ENCODE measurements at regions of chrX and their contacts with region 1.

Region 1: GRCh38 chrX:55717521-55718497 is at the start of gene RRAGB:
- DNase-seq: peak; percentile 85
- ATAC-seq: peak; percentile 100
- H3K4me3 ChIP-seq: peak within 1 kb of the TSS; percentile 76 to 79
- H3K27ac ChIP-seq: peak within 1 kb of the TSS; percentile 93
- H3K4me1 ChIP-seq: peaks cover 3% of the 10 kb centered on the region
- H3K27me3 ChIP-seq: no peaks in the 10 kb centered on the region
- CTCF ChIP-seq: peak; percentile 82
- total RNA-seq, gene RRAGB: 19.6 TPM

Region 2: DNA sequence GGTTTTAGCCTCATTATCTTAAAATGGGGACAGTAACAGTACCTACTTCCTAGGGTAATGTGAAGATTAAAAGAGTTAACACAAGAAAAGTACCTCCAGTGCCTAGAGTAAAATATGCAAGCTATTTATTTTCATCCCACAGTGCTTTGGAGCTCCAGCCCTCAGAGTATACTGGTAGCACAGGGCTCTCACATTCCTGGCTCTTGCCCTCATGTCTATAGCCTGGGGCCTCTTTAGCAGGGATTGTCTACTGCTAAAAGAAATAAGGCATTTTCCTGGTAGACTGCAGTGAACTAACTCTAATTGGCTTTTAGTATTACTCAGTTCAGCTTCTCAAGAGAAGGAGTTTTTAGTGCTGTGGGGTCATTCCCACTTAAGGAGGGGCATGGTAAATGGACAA is 60.5 kb after region 1 on chrX:
- CTCF ChIA-PET with region 1: no interaction called
- POLR2A ChIA-PET with region 1: no interaction called
- in situ Hi-C with region 1: no loop called
- intact Hi-C with region 1: loop called (anchors 10 kb)
- DNase-seq: no peak
- ATAC-seq: no peak
- H3K4me3 ChIP-seq: no peak overlapping the region
- H3K27ac ChIP-seq: no peak overlapping the region
- H3K4me1 ChIP-seq: no peaks in the 10 kb centered on the region
- H3K27me3 ChIP-seq: no peaks in the 10 kb centered on the region
- CTCF ChIP-seq: no peak

Region 3: DNA sequence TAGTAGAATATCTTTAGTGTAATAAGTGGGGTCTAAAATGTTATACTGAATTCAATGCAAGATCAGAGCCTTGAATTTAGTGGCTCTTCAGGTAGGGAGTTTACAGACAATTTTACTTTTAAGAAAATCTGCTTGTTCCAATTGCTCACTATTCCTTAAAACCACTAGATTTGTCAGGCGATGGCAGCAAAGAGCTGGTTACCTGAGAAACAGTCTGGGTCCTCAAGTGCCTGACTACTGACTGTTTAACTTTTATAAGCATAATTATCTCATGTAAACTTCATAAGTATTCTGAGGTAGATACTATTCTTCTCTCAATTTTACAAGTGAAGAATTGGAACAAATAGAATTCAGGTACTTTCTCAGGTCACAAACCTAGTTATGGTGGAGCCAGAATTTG is 84.0 kb after region 1 on chrX:
- CTCF ChIA-PET with region 1: no interaction called
- POLR2A ChIA-PET with region 1: no interaction called
- in situ Hi-C with region 1: no loop called
- intact Hi-C with region 1: no loop called
- DNase-seq: no peak
- ATAC-seq: no peak
- H3K4me3 ChIP-seq: no peak overlapping the region
- H3K27ac ChIP-seq: no peak overlapping the region
- H3K4me1 ChIP-seq: no peaks in the 10 kb centered on the region
- H3K27me3 ChIP-seq: no peaks in the 10 kb centered on the region
- CTCF ChIP-seq: no peak; the same call in 1 of the 2 replicates

Region 4: DNA sequence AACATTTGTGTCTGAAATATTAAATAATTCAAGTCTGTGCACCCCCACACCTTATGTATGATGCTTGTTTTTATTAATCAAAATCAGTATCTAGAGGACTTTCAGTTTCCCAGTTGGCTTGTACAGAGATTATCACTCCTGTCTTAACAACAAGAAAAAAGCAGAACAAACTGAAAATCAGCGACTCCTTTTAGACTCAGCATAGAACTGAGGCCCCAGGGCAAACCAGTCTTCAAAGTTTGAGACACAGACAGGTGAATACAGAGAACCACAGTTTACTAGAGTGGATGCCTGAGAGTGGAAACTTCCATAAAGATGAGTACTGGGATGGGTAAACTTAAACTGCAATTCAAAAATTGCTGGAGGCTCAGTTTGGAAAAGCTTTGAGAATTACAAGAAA is 371.6 kb after region 1 on chrX:
- CTCF ChIA-PET with region 1: no interaction called
- POLR2A ChIA-PET with region 1: no interaction called
- in situ Hi-C with region 1: no loop called
- intact Hi-C with region 1: no loop called
- DNase-seq: no peak
- ATAC-seq: no peak
- H3K4me3 ChIP-seq: no peak overlapping the region
- H3K27ac ChIP-seq: no peak overlapping the region
- H3K4me1 ChIP-seq: no peaks in the 10 kb centered on the region
- H3K27me3 ChIP-seq: no peaks in the 10 kb centered on the region
- CTCF ChIP-seq: no peak

Measured in Panc1 (cell line).